PC-3 (cell line): ENCODE measurements at regions of chr3 and their contacts with region 1.

Region 1: GRCh38 chr3:167350245-167350862 is 29.7 kb downstream of the ZBBX start:
- DNase-seq: peak; percentile 59
- ATAC-seq: peak; percentile 40; the same call in 1 of the 2 replicates
- H3K4me3 ChIP-seq: no peak overlapping the region
- H3K27ac ChIP-seq: no peak overlapping the region
- H3K4me1 ChIP-seq: no peaks in the 10 kb centered on the region
- H3K27me3 ChIP-seq: no peaks in the 10 kb centered on the region
- CTCF ChIP-seq: peak; percentile 65

Region 2: DNA sequence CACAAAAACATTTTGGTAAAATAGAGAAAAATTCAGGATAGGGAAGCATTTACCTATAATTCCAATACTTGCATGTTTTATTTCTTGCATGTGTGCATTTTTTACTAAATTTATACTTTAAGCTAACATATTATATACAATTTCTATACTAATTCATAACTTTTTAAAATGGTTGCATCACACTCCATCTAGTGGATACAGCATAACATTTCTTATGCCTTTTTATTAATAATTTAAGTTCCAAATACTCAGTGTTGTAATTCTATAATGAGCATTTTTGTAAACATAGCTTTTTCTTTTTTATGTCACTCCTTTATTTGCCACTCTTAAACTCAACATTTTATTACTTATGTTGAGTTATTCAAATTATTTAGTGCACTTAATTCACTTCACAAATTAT is 448.0 kb before region 1 on chr3:
- CTCF ChIA-PET with region 1: no interaction called
- POLR2A ChIA-PET with region 1: no interaction called
- intact Hi-C with region 1: loop called (anchors 5 kb)
- DNase-seq: peak; percentile 23
- ATAC-seq: no peak
- H3K4me3 ChIP-seq: no peak overlapping the region
- H3K27ac ChIP-seq: no peak overlapping the region
- H3K4me1 ChIP-seq: no peaks in the 10 kb centered on the region
- H3K27me3 ChIP-seq: no peaks in the 10 kb centered on the region
- CTCF ChIP-seq: peak; percentile 53

Region 3: GRCh38 chr3:167151636-167152035 is 198.7 kb before region 1 on chr3:
- CTCF ChIA-PET with region 1: no interaction called
- POLR2A ChIA-PET with region 1: no interaction called
- intact Hi-C with region 1: loop called (anchors 1 kb)
- DNase-seq: no peak
- ATAC-seq: no peak
- H3K4me3 ChIP-seq: no peak overlapping the region
- H3K27ac ChIP-seq: no peak overlapping the region
- H3K4me1 ChIP-seq: no peaks in the 10 kb centered on the region
- H3K27me3 ChIP-seq: no peaks in the 10 kb centered on the region
- CTCF ChIP-seq: no peak

Region 4: DNA sequence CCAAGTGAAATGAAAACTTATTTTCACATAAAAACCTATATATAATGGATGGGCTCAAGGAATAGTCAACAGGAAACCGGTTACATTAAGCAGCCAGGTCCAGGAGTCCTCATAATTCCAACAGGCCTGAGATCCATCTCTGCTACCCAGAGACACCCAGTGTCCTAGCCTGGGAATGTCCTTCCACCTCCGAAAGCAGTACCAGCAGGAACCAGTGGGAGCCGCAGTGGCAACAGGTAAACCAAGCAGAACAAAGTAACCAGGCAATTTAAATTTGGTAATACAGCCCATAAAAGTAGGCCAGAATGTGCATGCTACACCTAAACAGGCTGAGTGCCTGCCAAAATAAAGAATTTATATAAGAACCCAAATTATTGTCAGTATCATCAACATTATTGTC is 165.8 kb before region 1 on chr3:
- CTCF ChIA-PET with region 1: no interaction called
- POLR2A ChIA-PET with region 1: no interaction called
- intact Hi-C with region 1: loop called (anchors 1 kb)
- DNase-seq: peak; percentile 47
- ATAC-seq: peak; percentile 51; the same call in 1 of the 2 replicates
- H3K4me3 ChIP-seq: no peak overlapping the region
- H3K27ac ChIP-seq: no peak overlapping the region
- H3K4me1 ChIP-seq: no peaks in the 10 kb centered on the region
- H3K27me3 ChIP-seq: no peaks in the 10 kb centered on the region
- CTCF ChIP-seq: peak; percentile 59

Region 5: DNA sequence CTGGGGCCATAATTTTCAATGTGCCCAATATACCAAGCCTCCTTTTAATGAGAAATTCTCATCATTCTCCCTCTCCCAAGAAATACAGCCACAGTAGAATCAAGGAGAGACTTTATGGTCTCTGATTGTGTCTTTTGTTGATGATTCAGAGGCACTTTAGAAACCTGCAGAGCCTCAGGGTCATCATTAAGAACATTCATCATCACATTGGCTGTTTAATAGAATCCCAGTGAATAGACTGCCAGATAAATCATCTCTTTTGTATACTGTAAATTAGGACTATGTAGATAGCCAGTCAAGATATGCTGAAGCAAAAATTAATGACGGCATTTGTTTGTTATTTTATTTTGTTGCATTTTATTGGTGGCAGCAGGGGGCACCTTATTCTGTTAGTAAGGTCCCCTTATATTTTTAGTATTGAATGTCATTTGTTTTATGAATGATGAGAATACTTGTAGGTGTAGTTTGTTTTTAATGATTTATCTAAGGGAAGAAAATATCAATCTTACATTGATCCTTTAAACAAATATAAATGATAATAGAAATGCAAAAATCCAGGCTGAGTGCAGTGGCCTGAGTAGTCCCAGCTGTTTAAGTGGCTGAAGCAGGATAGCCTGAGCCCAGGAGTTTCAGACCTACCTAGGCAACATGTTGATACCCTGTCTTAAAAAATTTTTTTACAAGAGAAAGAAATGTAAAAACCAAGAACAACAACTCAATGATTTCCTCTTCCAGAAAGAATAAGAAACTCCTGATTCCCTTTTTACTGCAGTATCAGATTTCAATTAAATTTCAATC is 109.1 kb before region 1 on chr3:
- CTCF ChIA-PET with region 1: no interaction called
- POLR2A ChIA-PET with region 1: no interaction called
- intact Hi-C with region 1: loop called (anchors 10 kb)
- DNase-seq: no peak
- ATAC-seq: peak; percentile 67
- H3K4me3 ChIP-seq: no peak overlapping the region
- H3K27ac ChIP-seq: no peak overlapping the region
- H3K4me1 ChIP-seq: no peaks in the 10 kb centered on the region
- H3K27me3 ChIP-seq: no peaks in the 10 kb centered on the region
- CTCF ChIP-seq: no peak

Region 6: DNA sequence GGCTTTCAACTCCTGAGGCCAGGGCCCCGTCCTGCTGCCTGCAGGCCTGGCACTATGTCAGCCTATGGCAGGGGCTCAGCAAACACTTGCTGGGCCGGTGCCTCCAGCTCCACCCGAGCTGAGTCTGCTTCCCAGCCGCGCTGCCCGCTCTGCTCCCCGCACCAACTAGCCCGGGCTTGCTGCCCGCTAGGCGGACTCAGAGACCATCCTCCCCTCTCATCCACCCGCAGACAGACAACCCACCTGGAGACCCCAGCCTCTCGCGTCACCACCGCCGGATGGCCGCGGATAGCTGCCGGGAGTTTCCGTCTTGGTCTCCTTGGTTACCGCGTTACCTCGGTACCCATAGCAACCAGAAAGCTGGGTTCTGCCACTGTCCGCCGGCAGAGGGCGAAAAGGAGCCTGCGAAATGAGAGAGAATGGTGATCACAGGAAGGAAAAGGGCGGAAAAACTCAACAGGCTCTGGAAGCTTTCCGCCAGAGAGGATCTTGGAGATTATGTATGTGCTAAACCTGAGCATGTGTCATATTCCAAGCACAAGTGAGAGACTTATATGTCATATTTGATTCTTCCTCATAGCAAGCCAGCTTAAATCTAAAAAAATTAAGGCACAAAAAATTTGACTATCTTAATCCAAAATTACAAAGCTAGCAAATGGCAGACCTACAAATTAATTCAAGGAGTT is 29.8 kb after region 1 on chr3 and contains the start of gene ZBBX:
- CTCF ChIA-PET with region 1: no interaction called
- POLR2A ChIA-PET with region 1: no interaction called
- intact Hi-C with region 1: no loop called
- DNase-seq: peak; percentile 94
- ATAC-seq: peak; percentile 97
- H3K4me3 ChIP-seq: peak within 1 kb of the TSS; percentile 45
- H3K27ac ChIP-seq: no peak within 1 kb of the TSS
- H3K4me1 ChIP-seq: no peaks in the 10 kb centered on the region
- H3K27me3 ChIP-seq: no peaks in the 10 kb centered on the region
- CTCF ChIP-seq: peak; percentile 90
- total RNA-seq, gene ZBBX: 1.0 TPM in 1 of 2 replicates, not detected in the other